ENCODE measurements at regions of chr11 and their contacts with region 1.

Region 1: GRCh38 chr11:30346068-30346688 is 23.3 kb downstream of the ARL14EP start:
- DNase-seq: peak in 3 of 42 donors; percentile 20 to 32 (median 23)

Region 2: DNA sequence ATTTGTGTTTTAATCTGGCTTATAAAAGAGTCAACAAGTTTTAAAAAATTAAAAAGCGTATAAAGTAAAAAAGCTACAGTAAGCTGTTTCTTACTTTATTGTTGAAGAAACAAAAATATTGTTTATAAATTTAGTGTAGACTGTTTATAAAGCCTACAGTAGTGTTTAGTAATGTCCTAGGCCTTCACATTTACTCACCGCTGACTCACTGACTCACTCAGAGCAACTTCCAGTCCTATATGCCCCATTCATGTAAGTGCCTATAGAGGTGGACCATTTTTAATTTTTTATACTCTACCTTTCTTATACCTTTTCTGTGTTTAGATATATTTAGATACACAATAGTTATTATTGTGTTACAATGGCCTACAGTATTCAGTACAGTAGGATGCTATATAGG is 227.8 kb after region 1 on chr11:
- intact Hi-C with region 1: loop called (anchors 10 kb)
- DNase-seq: no peak

Region 3: DNA sequence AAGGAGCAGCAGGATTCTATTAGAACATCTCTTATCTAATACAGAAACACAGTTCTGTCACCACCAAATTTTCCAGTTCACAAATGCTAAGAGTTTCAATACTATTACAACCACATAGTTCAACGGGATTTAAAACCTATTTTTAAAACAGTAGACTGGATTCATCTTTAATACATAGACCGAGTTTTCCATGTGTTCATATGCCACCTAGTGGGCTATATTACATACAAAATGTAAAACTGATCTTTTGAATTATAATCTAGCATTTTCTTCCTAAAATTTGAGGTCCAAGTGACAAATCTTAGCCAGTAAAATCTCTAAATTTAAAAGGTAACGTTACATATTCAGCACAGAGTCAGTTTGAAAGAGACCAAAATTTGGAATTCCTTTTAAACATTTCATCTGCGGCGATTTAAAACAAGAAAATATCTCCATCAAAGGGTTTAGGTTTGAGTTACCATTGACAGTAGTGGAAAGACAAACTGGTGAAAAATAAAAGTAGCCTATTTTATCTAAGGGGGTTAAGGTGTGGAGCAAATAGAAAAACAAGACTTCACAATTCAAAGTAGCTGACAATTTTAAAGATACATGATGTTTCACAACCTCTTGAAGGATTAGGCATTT is 509.3 kb after region 1 on chr11:
- intact Hi-C with region 1: loop called (anchors 10 kb)
- DNase-seq: no peak

Region 4: GRCh38 chr11:30917859-30918478 is 571.8 kb after region 1 on chr11:
- intact Hi-C with region 1: loop called (anchors 10 kb)
- DNase-seq: peak in 16 of 42 donors; percentile 6 to 60 (median 20)

Measured in head of caudate nucleus (tissue), 42 donors.